ENCODE measurements at regions of chr13 and their contacts with region 1.

Region 1: GRCh38 chr13:95579303-95579702 is 26.8 kb downstream of the CLDN10 start:
- DNase-seq: no peak
- H3K4me3 Mint-ChIP-seq: no peak overlapping the region
- H3K27ac Mint-ChIP-seq: no peak overlapping the region
- H3K4me1 Mint-ChIP-seq: peaks cover 10% of the 10 kb centered on the region
- H3K27me3 Mint-ChIP-seq: peaks cover 8% of the 10 kb centered on the region

Region 2: GRCh38 chr13:95530178-95530577 is 49.1 kb before region 1 on chr13:
- CTCF ChIA-PET with region 1: no interaction called
- POLR2A ChIA-PET with region 1: no interaction called
- intact Hi-C with region 1: no loop called
- DNase-seq: no peak
- H3K4me3 Mint-ChIP-seq: no peak overlapping the region
- H3K27ac Mint-ChIP-seq: no peak overlapping the region
- H3K4me1 Mint-ChIP-seq: peaks cover 1% of the 10 kb centered on the region
- H3K27me3 Mint-ChIP-seq: peaks cover 14% of the 10 kb centered on the region

Region 3: DNA sequence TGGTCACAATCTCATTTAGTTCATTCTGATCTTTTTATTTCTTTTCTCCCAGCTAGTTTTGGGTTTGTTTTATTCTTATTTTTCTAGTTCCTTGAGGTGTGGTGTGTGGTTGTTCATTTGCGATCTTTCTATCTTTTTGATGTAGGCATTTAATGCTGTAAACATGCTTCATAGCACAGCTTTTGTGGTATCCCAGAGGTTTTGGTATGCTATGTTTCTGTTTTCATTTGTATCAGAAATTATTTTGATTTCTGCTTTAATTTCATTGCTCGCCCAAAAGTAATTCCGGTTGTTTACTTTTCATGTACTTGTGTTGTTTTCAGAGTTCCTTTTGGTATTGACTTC is 110.3 kb after region 1 on chr13:
- CTCF ChIA-PET with region 1: no interaction called
- POLR2A ChIA-PET with region 1: no interaction called
- intact Hi-C with region 1: loop called (anchors 1 kb)
- DNase-seq: no peak
- H3K4me3 Mint-ChIP-seq: no peak overlapping the region
- H3K27ac Mint-ChIP-seq: peak overlapping the region; percentile 57
- H3K4me1 Mint-ChIP-seq: peaks cover 49% of the 10 kb centered on the region
- H3K27me3 Mint-ChIP-seq: no peaks in the 10 kb centered on the region

Measured in activated CD4-positive, alpha-beta memory T cell treated with anti-CD3 and anti-CD28 coated beads for 36 hours (primary cell).